BJ (cell line): ENCODE measurements at regions of chr20 and their contacts with region 1.

Region 1: DNA sequence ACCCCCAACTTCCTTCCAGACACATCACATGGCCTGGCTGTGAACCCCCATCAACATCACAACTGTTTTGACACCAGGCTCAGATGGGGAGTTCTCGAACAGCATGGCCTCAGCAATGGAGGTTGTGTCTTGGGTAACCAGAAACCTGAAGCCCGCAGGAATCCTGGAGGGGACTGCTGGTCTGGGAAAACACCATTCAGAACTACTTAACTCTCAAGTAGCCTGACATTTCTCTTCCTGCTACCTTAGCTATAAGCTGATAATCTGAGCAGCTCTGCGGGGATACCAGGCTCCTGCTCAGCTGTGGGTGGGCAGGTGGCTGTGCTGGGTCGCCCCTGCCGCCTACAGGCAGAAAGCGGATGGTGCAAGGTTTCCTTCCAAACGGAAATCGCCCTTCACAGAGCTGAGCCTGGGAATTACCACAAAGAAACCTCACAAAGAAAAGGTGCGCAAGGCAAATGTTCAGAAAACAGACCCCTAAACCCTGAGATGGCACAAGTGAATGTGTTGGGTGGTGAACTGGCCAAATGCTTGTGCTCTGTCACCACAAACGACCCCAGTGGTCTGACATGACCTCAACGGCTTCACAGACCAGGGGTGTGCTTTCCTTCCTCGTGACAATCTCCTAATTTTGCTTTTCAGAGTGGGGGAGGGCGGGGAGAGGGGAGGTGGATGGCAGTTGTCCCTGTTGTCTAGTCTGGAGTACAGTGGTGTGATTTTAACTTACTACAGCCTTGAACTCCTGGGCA is 29.5 kb downstream of the SNX5 start:
- DNase-seq: no peak
- H3K4me3 ChIP-seq: no peak overlapping the region
- H3K27me3 ChIP-seq: no peaks in the 10 kb centered on the region
- CTCF ChIP-seq: peak; percentile 97

Region 2: GRCh38 chr20:17504898-17505635 is 434.0 kb before region 1 on chr20:
- CTCF ChIA-PET with region 1: interaction called, 33 read pairs
- POLR2A ChIA-PET with region 1: no interaction called
- DNase-seq: no peak
- H3K4me3 ChIP-seq: peak overlapping the region; percentile 50
- H3K27me3 ChIP-seq: no peaks in the 10 kb centered on the region
- CTCF ChIP-seq: peak; percentile 54

Region 3: GRCh38 chr20:17916433-17916891 is 22.6 kb before region 1 on chr20:
- CTCF ChIA-PET with region 1: interaction called, 10 read pairs
- POLR2A ChIA-PET with region 1: no interaction called
- DNase-seq: no peak
- H3K4me3 ChIP-seq: no peak overlapping the region
- H3K27me3 ChIP-seq: no peaks in the 10 kb centered on the region
- CTCF ChIP-seq: no peak

Region 4: GRCh38 chr20:17958373-17959256 is 19.6 kb after region 1 on chr20:
- CTCF ChIA-PET with region 1: interaction called, 10 read pairs
- POLR2A ChIA-PET with region 1: no interaction called
- DNase-seq: no peak
- H3K4me3 ChIP-seq: no peak overlapping the region
- H3K27me3 ChIP-seq: no peaks in the 10 kb centered on the region
- CTCF ChIP-seq: peak; percentile 36; the same call in 1 of the 2 replicates